Posterior vena cava (tissue), 2 donors: ENCODE measurements at regions of chr2 and their contacts with region 1.

Region 1: GRCh38 chr2:112048887-112049286 is 6.2 kb upstream of the TMEM87B start:
- DNase-seq: no peak

Region 2: GRCh38 chr2:111897924-111898702 is 150.8 kb before region 1 on chr2 and contains the start of gene MERTK:
- intact Hi-C with region 1: loop called (anchors 5 kb)
- DNase-seq: peak; percentile 95
- total RNA-seq, gene MERTK: 34.2 to 37.5 TPM